ENCODE measurements at regions of chr2 and their contacts with region 1.

Region 1: DNA sequence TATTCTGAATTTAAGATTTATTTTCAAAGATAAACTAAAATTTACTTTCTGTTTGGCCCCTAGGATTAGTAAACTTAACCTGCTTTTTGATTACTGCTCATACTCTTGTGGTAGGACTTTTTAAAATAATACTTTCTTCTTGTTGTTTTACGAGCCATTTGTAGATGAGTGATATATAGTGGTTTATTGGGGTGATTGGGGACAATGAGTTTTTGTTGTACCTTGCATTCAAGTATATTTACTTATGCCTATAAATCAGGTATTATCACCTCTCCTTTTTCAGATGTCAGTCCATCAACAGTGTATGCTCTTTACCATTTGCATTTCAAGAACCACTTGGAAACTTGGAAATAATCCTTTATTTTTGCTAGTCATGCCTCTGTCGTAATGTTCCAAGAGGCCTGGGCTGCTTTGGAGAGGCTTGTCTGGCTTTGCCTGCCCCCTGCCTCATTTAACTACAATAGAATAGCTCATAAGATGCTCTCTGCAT is 131.3 kb downstream of the COMMD1 start:
- DNase-seq: no peak
- H3K4me3 ChIP-seq: no peak overlapping the region
- H3K4me3 Mint-ChIP-seq: no peak overlapping the region
- H3K27ac Mint-ChIP-seq: no peak overlapping the region
- H3K4me1 ChIP-seq: peaks cover 4% of the 10 kb centered on the region
- H3K4me1 Mint-ChIP-seq: peaks cover 9% of the 10 kb centered on the region
- H3K27me3 ChIP-seq: no peaks in the 10 kb centered on the region
- H3K27me3 Mint-ChIP-seq: no peaks in the 10 kb centered on the region
- CTCF ChIP-seq: no peak

Region 2: GRCh38 chr2:62065243-62065642 is 28.4 kb after region 1 on chr2:
- CTCF ChIA-PET with region 1: interaction called, 11 read pairs
- POLR2A ChIA-PET with region 1: no interaction called
- intact Hi-C with region 1: no loop called
- DNase-seq: no peak
- H3K4me3 ChIP-seq: no peak overlapping the region
- H3K4me3 Mint-ChIP-seq: no peak overlapping the region
- H3K27ac Mint-ChIP-seq: no peak overlapping the region
- H3K4me1 ChIP-seq: no peaks in the 10 kb centered on the region
- H3K4me1 Mint-ChIP-seq: no peaks in the 10 kb centered on the region
- H3K27me3 ChIP-seq: no peaks in the 10 kb centered on the region
- H3K27me3 Mint-ChIP-seq: no peaks in the 10 kb centered on the region
- CTCF ChIP-seq: no peak

Region 3: DNA sequence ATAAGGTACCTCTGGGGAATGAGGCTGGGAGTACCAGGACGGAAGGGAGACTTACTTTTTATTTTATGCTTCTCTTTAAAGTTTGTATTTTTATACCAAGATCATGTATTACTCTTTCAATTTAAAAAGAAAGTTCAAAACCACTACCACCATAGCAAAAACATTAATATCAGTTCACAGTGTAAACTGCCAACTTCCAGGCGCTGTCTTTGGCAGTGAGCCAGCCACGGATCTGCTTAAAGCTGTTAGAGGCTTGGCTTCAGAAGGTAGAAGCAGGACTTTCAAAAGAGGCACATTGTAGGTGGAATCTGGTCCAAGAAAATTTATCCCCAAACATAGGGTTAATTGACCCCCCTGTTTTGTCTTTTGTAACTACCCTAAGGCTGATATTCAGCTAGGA is 233.9 kb after region 1 on chr2:
- CTCF ChIA-PET with region 1: no interaction called
- POLR2A ChIA-PET with region 1: no interaction called
- intact Hi-C with region 1: no loop called
- DNase-seq: no peak
- H3K4me3 ChIP-seq: no peak overlapping the region
- H3K4me3 Mint-ChIP-seq: no peak overlapping the region
- H3K27ac Mint-ChIP-seq: no peak overlapping the region
- H3K4me1 ChIP-seq: peaks cover 15% of the 10 kb centered on the region
- H3K4me1 Mint-ChIP-seq: peaks cover 22% of the 10 kb centered on the region
- H3K27me3 ChIP-seq: no peaks in the 10 kb centered on the region
- H3K27me3 Mint-ChIP-seq: no peaks in the 10 kb centered on the region
- CTCF ChIP-seq: no peak

Region 4: GRCh38 chr2:62391696-62392095 is 354.9 kb after region 1 on chr2:
- CTCF ChIA-PET with region 1: no interaction called
- POLR2A ChIA-PET with region 1: no interaction called
- intact Hi-C with region 1: no loop called
- DNase-seq: no peak
- H3K4me3 ChIP-seq: no peak overlapping the region
- H3K4me3 Mint-ChIP-seq: no peak overlapping the region
- H3K27ac Mint-ChIP-seq: no peak overlapping the region
- H3K4me1 ChIP-seq: no peaks in the 10 kb centered on the region
- H3K4me1 Mint-ChIP-seq: no peaks in the 10 kb centered on the region
- H3K27me3 ChIP-seq: no peaks in the 10 kb centered on the region
- H3K27me3 Mint-ChIP-seq: no peaks in the 10 kb centered on the region
- CTCF ChIP-seq: no peak

Measured in Caco-2 (cell line).